CD14-positive monocyte (primary cell): ENCODE measurements at regions of chr19 and their contacts with region 1.

Region 1: GRCh38 chr19:47514869-47515588 is at the start of gene NAPA:
- DNase-seq: peak; percentile 100
- H3K4me3 ChIP-seq: peak within 1 kb of the TSS; percentile 84 to 99 (median 99)
- H3K4me3 Mint-ChIP-seq: peak within 1 kb of the TSS; percentile 98
- H3K27ac ChIP-seq: peak within 1 kb of the TSS; percentile 98 to 100
- H3K27ac Mint-ChIP-seq: peak within 1 kb of the TSS; percentile 98 to 100 (median 99)
- H3K4me1 ChIP-seq: peaks cover 31 to 33% of the 10 kb centered on the region in 2 donors
- H3K4me1 Mint-ChIP-seq: peaks cover 46% of the 10 kb centered on the region
- H3K27me3 ChIP-seq: no peaks in the 10 kb centered on the region
- H3K27me3 Mint-ChIP-seq: peaks cover 0 to 13% (median 7%) of the 10 kb centered on the region in 3 donors
- CTCF ChIP-seq: no peak
- polyA plus RNA-seq, gene NAPA: 77.5 to 135 (median 111) TPM

Region 2: GRCh38 chr19:47436712-47437401 is 78.2 kb before region 1 on chr19:
- intact Hi-C with region 1: loop called (anchors 5 to 10 kb)
- DNase-seq: peak; percentile 59 to 71 (median 62)
- H3K4me3 ChIP-seq: no peak overlapping the region
- H3K4me3 Mint-ChIP-seq: peak overlapping the region in 1 of 2 donors; percentile 33
- H3K27ac ChIP-seq: no peak overlapping the region
- H3K27ac Mint-ChIP-seq: no peak overlapping the region
- H3K4me1 ChIP-seq: no peaks in the 10 kb centered on the region
- H3K4me1 Mint-ChIP-seq: peaks cover 2% of the 10 kb centered on the region
- H3K27me3 ChIP-seq: peaks cover 0 to 6% of the 10 kb centered on the region in 2 donors
- H3K27me3 Mint-ChIP-seq: peaks cover 12 to 39% (median 23%) of the 10 kb centered on the region in 3 donors
- CTCF ChIP-seq: peak; percentile 91

Region 3: DNA sequence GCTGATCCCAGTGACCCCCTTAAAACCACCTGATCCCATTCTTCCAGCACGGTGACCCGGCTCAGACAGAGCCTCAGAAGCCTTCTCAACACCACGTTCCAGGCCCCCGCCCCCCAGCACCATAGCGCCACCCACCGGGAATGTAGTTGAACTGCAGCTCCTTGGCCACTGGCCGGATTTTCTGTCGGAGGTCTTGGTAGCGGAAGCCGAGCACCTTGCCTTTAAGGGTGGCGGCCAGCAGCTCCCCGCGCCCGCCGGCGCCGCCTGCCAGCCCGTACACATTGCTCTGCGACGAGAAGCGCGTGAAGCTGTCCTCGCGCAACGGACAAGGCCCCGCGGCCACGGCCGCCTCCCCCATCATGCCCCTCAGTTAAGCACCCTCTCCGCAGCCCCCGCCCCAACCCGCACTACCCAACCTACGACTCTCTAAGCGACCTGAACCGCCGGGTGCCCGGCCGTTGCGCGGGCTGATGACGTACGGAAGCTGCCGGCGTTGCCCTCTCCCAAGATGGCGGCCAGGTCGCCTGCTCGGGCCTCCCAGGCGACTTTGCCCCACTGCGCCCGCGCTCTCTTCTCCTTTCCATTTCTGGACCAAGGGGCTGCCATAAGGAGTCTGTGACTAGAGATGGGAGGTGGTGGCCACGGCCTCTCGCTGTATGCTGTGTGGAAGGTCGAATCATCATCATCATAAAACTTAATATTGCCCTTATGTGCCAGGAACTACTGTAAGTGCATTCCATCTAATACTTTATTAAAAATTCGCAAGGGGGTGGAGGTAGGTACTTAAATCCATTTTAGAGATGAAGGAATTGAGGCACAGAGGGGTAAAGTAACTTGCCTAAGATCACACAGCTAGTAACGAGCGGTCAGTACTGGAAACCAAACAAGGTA is 31.0 kb before region 1 on chr19 and contains the start of gene KPTN:
- intact Hi-C with region 1: loop called (anchors 2 to 5 kb)
- DNase-seq: peak; percentile 89 to 93 (median 92)
- H3K4me3 ChIP-seq: peak within 1 kb of the TSS; percentile 59 to 89 (median 88)
- H3K4me3 Mint-ChIP-seq: peak within 1 kb of the TSS; percentile 86 to 95
- H3K27ac ChIP-seq: peak within 1 kb of the TSS; percentile 31 to 96
- H3K27ac Mint-ChIP-seq: peak within 1 kb of the TSS; percentile 95 to 100 (median 99)
- H3K4me1 ChIP-seq: peaks cover 14 to 20% of the 10 kb centered on the region in 2 donors
- H3K4me1 Mint-ChIP-seq: peaks cover 35% of the 10 kb centered on the region
- H3K27me3 ChIP-seq: no peaks in the 10 kb centered on the region
- H3K27me3 Mint-ChIP-seq: peaks cover 6 to 8% (median 6%) of the 10 kb centered on the region in 3 donors
- CTCF ChIP-seq: peak; percentile 93
- polyA plus RNA-seq, gene KPTN: 9.5 to 9.7 (median 9.5) TPM

Region 4: GRCh38 chr19:47600246-47601179 is 85.5 kb after region 1 on chr19:
- intact Hi-C with region 1: loop called in 1 of 2 experiments (anchors 1 kb)
- DNase-seq: peak; percentile 97 to 99 (median 99)
- H3K4me3 ChIP-seq: peak overlapping the region; percentile 42 to 77 (median 65)
- H3K4me3 Mint-ChIP-seq: peak overlapping the region; percentile 79 to 88
- H3K27ac ChIP-seq: peak overlapping the region; percentile 49 to 76
- H3K27ac Mint-ChIP-seq: peak overlapping the region; percentile 79 to 96 (median 90)
- H3K4me1 ChIP-seq: peaks cover 44 to 60% of the 10 kb centered on the region in 2 donors
- H3K4me1 Mint-ChIP-seq: peaks cover 64% of the 10 kb centered on the region
- H3K27me3 ChIP-seq: no peaks in the 10 kb centered on the region
- H3K27me3 Mint-ChIP-seq: peaks cover 1 to 20% (median 19%) of the 10 kb centered on the region in 3 donors
- CTCF ChIP-seq: no peak

Region 5: GRCh38 chr19:47697863-47698609 is 183.0 kb after region 1 on chr19:
- intact Hi-C with region 1: loop called in 1 of 2 experiments (anchors 5 kb)
- DNase-seq: peak; percentile 61 to 66 (median 63)
- H3K4me3 ChIP-seq: no peak overlapping the region
- H3K4me3 Mint-ChIP-seq: no peak overlapping the region
- H3K27ac ChIP-seq: peak overlapping the region in 1 of 2 donors; percentile 14
- H3K27ac Mint-ChIP-seq: peak overlapping the region in 2 of 7 donors; percentile 64 to 78
- H3K4me1 ChIP-seq: peaks cover 0 to 3% of the 10 kb centered on the region in 2 donors
- H3K4me1 Mint-ChIP-seq: peaks cover 5% of the 10 kb centered on the region
- H3K27me3 ChIP-seq: no peaks in the 10 kb centered on the region
- H3K27me3 Mint-ChIP-seq: no peaks in the 10 kb centered on the region
- CTCF ChIP-seq: peak; percentile 92

Region 6: DNA sequence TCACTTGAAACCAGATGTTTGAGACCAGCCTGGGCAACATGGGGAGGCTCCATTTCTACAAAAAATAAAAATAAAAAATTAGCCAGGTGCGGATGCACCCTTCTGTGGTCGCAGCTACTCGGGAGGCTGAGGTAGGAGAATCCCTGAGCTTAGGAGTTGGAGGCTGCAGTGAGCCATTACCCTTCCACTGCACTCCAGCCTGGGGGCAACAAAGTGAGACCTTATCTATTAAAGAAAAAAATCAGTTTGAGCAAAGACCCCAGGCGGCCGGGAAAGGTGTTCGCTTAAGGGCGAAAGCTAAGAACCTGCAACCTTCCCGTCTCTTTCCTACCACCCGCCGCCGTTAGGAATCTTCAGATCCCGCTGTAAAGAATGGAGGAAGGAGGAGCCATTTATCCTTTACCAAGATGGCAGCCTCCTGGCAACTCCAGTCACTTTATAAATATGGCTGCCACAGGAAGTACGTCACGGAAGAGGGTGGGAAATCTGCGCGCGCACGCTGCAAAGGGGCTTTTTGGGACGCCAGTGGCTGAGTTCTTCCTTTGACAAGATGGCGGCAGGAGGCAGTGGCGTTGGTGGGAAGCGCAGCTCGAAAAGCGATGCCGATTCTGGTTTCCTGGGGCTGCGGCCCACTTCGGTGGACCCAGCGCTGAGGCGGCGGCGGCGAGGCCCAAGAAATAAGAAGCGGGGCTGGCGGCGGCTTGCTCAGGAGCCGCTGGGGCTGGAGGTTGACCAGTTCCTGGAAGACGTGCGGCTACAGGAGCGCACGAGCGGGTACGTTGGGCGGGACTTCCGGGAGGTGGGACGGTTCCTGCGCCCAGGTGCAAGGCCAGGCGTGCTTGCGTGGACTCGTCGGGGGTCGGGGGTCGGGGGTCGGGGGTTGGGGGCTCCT is 230.2 kb after region 1 on chr19 and contains the start of gene NOP53:
- intact Hi-C with region 1: loop called in 1 of 2 experiments (anchors 10 kb)
- DNase-seq: peak; percentile 95 to 97 (median 96)
- H3K4me3 ChIP-seq: peak within 1 kb of the TSS; percentile 72 to 85 (median 82)
- H3K4me3 Mint-ChIP-seq: peak within 1 kb of the TSS; percentile 94 to 96
- H3K27ac ChIP-seq: peak within 1 kb of the TSS; percentile 81 to 94
- H3K27ac Mint-ChIP-seq: peak within 1 kb of the TSS; percentile 95 to 100 (median 99)
- H3K4me1 ChIP-seq: peaks cover 34 to 46% of the 10 kb centered on the region in 2 donors
- H3K4me1 Mint-ChIP-seq: peaks cover 33% of the 10 kb centered on the region
- H3K27me3 ChIP-seq: no peaks in the 10 kb centered on the region
- H3K27me3 Mint-ChIP-seq: peaks cover 3 to 7% (median 4%) of the 10 kb centered on the region in 3 donors
- CTCF ChIP-seq: no peak
- polyA plus RNA-seq, gene NOP53: 47.5 to 193 (median 70.4) TPM

Region 7: GRCh38 chr19:48206397-48207093 is 691.5 kb after region 1 on chr19:
- intact Hi-C with region 1: no loop called
- DNase-seq: peak; percentile 15 to 44 (median 17)
- H3K4me3 ChIP-seq: peak overlapping the region in 2 of 3 experiments; percentile 13 to 65
- H3K4me3 Mint-ChIP-seq: peak overlapping the region; percentile 70 to 89
- H3K27ac ChIP-seq: peak overlapping the region in 1 of 2 donors; percentile 74
- H3K27ac Mint-ChIP-seq: peak overlapping the region in 3 of 7 donors; percentile 59 to 89 (median 68)
- H3K4me1 ChIP-seq: peaks cover 22 to 33% of the 10 kb centered on the region in 2 donors
- H3K4me1 Mint-ChIP-seq: peaks cover 17% of the 10 kb centered on the region
- H3K27me3 ChIP-seq: no peaks in the 10 kb centered on the region
- H3K27me3 Mint-ChIP-seq: peaks cover 0 to 2% (median 0%) of the 10 kb centered on the region in 3 donors
- CTCF ChIP-seq: no peak